ENCODE measurements at regions of chr18 and their contacts with region 1.

Region 1: DNA sequence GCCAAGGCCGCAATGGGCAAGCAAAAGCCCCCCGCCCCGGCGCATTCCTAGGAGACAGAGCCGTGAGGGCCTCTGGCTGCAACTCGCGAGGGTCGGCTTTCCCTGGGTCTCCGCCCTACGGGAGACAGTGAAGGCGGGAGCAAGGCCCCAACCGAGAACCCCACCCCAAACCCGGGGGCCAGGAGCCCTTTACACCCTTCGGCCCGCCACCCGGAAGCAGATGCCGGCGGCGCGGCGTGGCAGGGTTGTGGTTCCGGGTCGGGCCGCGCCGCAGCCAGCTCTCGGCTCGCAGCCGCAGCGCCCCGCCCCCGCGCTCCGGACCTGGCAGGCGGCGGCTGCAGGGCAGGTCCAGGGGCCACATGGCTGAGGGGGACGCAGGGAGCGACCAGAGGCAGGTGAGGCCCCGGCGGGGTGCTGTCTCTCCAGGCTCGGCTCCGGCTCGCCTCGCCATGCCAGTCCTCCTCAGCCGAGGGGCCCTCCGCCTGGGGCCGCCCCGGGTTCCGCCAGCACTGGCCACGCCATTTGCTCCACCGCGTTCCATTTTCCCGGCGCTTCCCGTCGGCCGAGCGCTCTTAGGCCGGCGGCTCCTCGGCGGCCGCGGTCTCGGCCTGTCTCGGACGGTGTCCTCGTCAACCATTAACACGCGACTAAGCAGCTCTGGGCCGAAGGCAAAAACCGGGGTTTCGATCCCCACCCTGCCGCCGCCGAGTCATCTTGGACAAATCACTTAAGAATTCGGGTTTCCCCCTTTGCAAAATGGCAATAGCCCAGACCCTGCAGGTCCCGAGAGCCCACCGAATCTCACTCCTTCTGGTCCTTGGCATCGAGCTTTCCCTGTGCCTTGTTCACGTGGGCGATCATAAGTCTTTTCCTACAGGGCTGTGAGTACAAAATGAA is at the start of gene IMPACT:
- DNase-seq: no peak
- ATAC-seq: peak; percentile 99
- H3K4me3 ChIP-seq: peak within 1 kb of the TSS; percentile 70 to 72
- H3K27ac ChIP-seq: peak within 1 kb of the TSS; percentile 95
- H3K4me1 ChIP-seq: peaks cover 4% of the 10 kb centered on the region; the same call in 1 of the 2 replicates
- H3K27me3 ChIP-seq: peaks cover 4% of the 10 kb centered on the region
- CTCF ChIP-seq: no peak
- total RNA-seq, gene IMPACT: 36.2 TPM

Region 2: DNA sequence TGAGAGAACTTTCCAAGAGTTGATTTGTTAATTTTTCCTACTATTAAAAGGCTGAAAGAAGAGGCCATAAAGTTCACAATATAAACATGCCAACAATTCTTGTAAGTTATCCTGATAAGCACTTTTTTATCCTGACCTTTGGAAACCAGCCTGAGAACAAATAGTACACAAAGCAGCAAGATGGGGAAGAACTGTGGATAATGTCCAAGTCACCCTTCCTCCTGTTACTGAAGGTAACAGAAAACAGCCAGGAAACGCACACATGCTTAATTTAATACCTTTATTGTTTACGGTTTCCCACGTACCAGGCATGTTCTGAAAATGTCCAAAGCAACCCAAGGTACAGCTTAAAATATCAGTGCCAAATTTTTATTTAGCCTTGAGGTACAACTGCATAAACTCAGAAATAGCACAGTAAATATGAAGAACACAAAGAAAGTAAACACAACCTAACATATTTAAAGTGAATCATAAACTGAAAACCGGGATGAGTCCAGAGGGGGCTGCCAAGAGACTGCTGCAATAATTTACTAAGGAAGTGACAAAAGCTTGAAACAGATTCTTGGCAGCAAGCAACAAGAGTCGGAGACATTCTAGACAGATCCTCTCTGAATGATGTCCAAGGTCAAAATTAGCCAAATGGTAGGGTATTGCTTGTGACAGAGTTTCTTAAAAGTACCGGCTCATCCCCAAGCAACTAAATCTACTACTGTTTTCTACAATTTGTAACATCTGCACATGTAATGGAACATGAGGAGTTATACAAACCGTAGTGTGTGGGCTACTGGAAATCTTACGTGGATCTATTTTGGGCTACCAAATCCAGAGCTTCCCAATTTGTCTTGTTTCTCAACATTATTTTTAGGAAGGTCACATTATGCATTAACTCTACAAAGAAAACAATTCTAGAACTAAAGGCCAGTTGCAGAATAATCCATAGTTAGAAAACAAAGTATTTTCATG is 194.6 kb before region 1 on chr18:
- CTCF ChIA-PET with region 1: no interaction called
- POLR2A ChIA-PET with region 1: no interaction called
- in situ Hi-C with region 1: no loop called
- intact Hi-C with region 1: loop called (anchors 5 kb)
- DNase-seq: peak; percentile 38
- ATAC-seq: no peak
- H3K4me3 ChIP-seq: no peak overlapping the region
- H3K27ac ChIP-seq: no peak overlapping the region
- H3K4me1 ChIP-seq: peaks cover 6% of the 10 kb centered on the region; the same call in 1 of the 2 replicates
- H3K27me3 ChIP-seq: no peaks in the 10 kb centered on the region
- CTCF ChIP-seq: no peak

Region 3: DNA sequence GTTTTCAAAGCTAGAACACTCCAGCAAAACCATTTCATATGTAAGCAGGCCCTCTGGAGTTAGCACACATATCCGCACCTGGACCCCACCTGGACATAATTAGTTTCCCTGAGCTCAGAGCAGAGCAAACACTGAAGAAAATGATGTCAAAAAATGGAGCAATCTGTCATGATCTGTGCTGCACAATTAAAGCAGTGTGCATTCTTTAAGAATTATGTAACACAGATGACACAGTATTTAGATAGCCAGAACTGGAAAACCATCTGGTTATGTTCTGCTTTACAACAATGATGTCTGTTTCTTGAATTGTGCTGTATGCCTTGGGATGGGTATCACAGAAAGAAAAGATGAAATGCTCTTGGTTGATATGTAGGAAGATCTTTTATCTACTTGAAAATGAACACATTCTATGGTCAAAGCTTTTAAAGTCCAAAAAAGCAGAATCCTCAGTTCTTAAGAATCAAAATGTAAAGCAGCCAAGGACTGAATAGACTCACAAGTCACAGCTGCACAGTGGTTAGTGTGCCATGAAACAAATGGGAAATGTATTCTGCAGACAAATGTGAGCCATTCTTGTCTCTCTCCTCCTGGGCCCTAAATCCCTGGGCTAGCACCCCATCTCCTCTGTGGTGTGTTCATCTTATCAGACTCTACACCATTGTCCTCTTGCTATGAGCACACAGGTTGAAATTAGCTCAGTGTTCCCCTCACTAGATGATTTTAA is 70.5 kb after region 1 on chr18:
- CTCF ChIA-PET with region 1: no interaction called
- POLR2A ChIA-PET with region 1: no interaction called
- in situ Hi-C with region 1: no loop called
- intact Hi-C with region 1: no loop called
- DNase-seq: no peak
- ATAC-seq: no peak
- H3K4me3 ChIP-seq: no peak overlapping the region
- H3K27ac ChIP-seq: no peak overlapping the region
- H3K4me1 ChIP-seq: no peaks in the 10 kb centered on the region
- H3K27me3 ChIP-seq: peaks cover 5% of the 10 kb centered on the region
- CTCF ChIP-seq: no peak

Region 4: DNA sequence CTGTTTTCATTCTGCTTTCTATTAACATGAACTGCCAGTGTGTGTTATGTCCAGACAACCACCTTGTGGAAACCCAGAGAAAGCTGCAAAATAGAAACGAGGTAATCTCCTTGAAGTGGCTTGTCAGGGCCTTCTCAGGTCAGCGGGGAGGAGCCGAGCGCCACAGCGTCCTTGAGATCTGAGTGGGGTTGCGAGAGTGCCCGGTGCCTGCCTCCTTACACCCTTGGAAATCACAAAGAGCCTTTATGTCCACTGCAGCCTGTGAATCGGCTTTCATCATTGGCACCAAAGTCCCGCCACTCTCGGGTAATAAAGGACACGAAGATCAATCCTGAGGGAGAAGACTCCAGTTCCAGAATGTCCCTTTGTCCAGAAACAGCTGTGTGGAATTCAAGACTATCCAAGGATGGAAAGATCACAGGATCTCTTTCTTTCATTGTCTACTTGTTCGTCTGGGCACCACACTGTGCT is 168.9 kb after region 1 on chr18:
- CTCF ChIA-PET with region 1: no interaction called
- POLR2A ChIA-PET with region 1: no interaction called
- in situ Hi-C with region 1: no loop called
- intact Hi-C with region 1: no loop called
- DNase-seq: no peak
- ATAC-seq: no peak
- H3K4me3 ChIP-seq: no peak overlapping the region
- H3K27ac ChIP-seq: no peak overlapping the region
- H3K4me1 ChIP-seq: no peaks in the 10 kb centered on the region
- H3K27me3 ChIP-seq: peaks cover 6% of the 10 kb centered on the region; the same call in 1 of the 2 replicates
- CTCF ChIP-seq: no peak

Measured in Panc1 (cell line).